ENCODE measurements at regions of chr20 and their contacts with region 1.

Region 1: DNA sequence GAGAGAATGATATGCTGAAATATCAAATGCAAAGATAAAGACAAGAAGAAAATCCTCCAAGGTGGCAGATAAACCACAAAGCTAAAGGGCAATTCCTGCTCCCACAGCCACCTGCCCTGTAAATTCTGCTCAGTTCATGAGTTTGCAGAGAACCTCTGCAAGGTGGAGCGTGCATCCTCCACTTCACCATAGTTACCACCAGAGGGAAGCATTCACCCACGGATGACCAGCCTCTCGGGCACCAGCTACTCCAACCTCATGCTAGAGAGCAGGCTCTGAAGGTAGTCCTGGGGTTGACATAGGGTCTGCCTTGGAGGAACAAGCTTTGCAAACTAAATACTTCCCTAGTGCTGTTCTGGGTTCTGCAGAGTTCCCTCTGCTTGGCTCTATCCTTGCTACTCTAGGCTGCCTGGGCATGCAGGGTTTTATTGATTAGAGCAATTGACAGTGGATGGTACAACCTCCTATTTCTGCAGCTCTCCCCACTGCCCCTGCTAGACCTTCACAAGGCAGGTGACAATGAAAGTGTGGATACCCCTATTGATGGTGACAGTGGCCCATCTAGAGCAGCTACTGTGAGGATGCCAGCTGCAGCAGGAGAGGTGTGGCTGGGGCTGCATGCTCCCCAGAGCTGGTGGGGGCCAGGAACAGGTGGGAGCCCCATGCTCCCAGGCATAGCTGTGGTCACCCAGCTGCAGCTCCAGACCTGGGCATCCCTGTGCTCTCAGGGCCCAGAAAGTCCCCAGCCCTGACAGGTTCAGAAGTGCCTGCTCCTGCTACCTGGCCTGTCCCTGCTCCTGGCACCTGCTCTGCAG is 51.1 kb downstream of the GGTLC1 start:
- DNase-seq: peak; percentile 42 to 84 (median 74)
- H3K4me3 ChIP-seq: no peak overlapping the region
- H3K27ac ChIP-seq: no peak overlapping the region
- H3K27me3 ChIP-seq: no peaks in the 10 kb centered on the region
- CTCF ChIP-seq: peak; percentile 64 to 99 (median 91)

Region 2: GRCh38 chr20:23315099-23315498 is 622.4 kb before region 1 on chr20:
- intact Hi-C with region 1: no loop called
- DNase-seq: no peak
- H3K4me3 ChIP-seq: no peak overlapping the region
- H3K27ac ChIP-seq: no peak overlapping the region
- H3K27me3 ChIP-seq: peaks cover 0 to 2% (median 0%) of the 10 kb centered on the region in 45 donors
- CTCF ChIP-seq: no peak

Region 3: DNA sequence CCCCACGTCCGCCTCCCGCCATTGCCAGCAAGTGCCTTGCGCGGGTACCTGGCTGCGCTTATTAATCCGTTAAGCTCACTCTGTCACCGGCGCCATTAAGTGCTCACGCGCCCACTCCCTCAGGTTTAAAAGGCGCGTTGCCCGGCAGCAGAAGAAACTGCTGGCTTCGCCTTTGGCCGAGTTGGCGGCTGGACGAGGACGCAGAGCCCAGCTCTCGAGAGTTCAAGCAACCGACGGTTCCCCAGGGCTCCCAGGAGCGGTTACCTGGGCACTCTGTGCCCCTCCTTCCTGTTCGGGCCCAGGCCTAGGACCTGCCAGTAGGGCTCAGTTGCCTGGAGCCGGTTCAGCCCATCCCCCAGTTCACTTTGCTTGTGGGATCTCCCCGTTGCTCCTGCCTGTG is 51.1 kb after region 1 on chr20 and contains the start of gene GGTLC1:
- intact Hi-C with region 1: loop called in 1 of 2 experiments (anchors 2 kb)
- DNase-seq: no peak
- H3K4me3 ChIP-seq: no peak within 1 kb of the TSS
- H3K27ac ChIP-seq: no peak within 1 kb of the TSS
- H3K27me3 ChIP-seq: no peaks in the 10 kb centered on the region
- CTCF ChIP-seq: no peak
- total RNA-seq, gene GGTLC1: not detected

Region 4: DNA sequence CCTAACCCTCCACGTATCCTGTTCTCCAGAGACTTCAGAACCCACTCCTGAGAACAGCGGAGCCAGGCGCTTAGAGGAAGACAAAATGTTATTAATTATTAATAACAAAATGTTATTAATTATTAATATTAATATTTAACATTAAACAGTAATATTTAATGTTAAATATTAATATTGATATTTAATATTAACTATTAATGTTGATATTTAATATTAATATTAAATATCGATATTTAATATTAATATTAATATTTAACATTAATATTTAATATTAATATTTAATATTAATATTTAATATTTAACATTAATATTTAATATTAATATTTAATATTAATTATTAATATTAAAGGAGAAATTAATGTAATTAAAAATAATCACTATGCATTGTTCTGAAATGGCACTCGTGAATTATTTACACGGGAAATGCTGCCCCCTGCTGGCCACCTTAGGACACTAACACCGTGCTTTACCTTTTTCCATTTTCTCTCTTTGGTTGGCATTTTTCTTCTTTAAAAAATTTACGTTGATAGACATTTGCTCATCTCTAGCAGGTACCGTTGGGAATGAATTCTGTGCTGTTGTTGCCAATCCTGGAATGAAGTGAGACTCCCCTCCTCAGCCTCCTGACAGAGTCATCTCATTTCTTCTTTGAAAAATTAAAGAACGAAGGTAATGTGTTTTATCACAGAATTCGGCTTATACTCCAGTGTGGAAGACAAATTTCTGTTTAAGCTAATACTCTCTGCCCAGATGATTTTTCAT is 58.6 kb after region 1 on chr20:
- intact Hi-C with region 1: loop called in 1 of 2 experiments (anchors 5 kb)
- DNase-seq: peak in 8 of 10 donors; percentile 40 to 65 (median 54)
- H3K4me3 ChIP-seq: no peak overlapping the region
- H3K27ac ChIP-seq: no peak overlapping the region
- H3K27me3 ChIP-seq: peaks cover 0 to 9% (median 0%) of the 10 kb centered on the region in 45 donors
- CTCF ChIP-seq: peak; percentile 52 to 93 (median 82)